Activated CD4-positive, alpha-beta T cell treated with anti-CD3 and anti-CD28 coated beads for 36 hours (primary cell): ENCODE measurements at regions of chr13 and their contacts with region 1.

Region 1: DNA sequence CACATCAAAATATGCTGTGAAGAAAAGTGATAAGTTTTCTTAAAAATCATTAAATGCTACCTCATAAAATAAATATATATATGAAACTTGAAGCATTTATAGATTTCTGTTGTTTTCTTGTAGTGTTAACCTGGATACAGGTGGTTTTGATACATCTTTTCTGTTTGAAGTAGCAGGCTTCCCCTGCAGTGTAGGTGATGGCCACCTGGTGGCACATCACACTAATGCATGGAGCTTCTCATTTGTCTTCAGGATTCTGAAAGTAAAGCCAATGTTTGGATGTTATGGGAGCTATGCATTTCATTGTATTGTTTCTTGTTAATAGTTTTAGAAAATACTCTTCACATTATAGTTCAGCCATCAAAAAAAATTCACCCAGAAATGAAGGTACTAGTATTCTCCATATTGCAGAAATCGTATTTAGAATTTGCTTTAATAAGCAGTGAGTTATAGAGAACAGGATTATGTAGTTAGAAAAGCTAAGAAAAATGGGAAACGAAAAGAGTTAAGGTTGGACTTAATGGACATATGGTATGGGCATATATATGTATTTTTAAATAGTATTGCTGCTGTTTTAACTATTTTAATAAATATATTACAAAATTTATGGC is 18.7 kb downstream of the GPR180 start:
- DNase-seq: peak; percentile 51
- ATAC-seq: peak; percentile 63
- H3K4me3 Mint-ChIP-seq: no peak overlapping the region
- H3K27ac Mint-ChIP-seq: no peak overlapping the region
- H3K4me1 Mint-ChIP-seq: peaks cover 10% of the 10 kb centered on the region
- H3K27me3 Mint-ChIP-seq: no peaks in the 10 kb centered on the region

Region 2: DNA sequence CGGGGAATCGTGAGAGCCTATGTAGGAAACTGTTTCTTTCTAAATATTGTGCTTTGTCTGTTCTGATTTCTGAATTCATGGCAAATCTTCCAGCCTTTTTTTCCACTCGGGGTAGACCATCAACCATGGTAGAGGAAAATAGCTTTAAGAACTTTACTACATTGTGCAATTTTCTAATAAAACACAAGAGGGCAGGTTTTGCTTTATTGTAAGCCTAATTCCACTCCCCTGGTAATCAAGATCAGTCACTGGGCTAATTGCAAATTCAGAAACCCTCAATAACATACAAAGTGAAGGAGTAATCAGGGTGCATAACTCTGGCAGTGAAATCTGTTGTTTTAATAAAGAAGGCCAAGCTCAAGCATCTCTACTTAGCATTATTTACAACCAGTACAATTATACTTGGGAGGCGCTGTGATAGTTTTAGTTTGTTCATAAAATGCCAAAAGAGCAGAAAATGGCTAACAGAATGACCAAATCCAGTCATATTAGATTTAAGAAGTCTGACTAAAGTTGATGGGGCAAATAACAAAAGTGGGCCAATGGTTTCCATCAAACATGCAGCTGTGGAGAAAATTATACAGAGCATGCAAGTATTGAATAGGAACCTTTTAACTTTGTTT is 184.7 kb before region 1 on chr13:
- CTCF ChIA-PET with region 1: interaction called, 176 read pairs
- POLR2A ChIA-PET with region 1: interaction called, 3 read pairs
- intact Hi-C with region 1: loop called (anchors 1 kb)
- DNase-seq: no peak
- ATAC-seq: peak; percentile 65
- H3K4me3 Mint-ChIP-seq: no peak overlapping the region
- H3K27ac Mint-ChIP-seq: no peak overlapping the region
- H3K4me1 Mint-ChIP-seq: peaks cover 33% of the 10 kb centered on the region
- H3K27me3 Mint-ChIP-seq: no peaks in the 10 kb centered on the region

Region 3: GRCh38 chr13:94579063-94579462 is 41.3 kb before region 1 on chr13:
- CTCF ChIA-PET with region 1: interaction called, 10 read pairs
- POLR2A ChIA-PET with region 1: no interaction called
- intact Hi-C with region 1: no loop called
- DNase-seq: no peak
- ATAC-seq: no peak
- H3K4me3 Mint-ChIP-seq: no peak overlapping the region
- H3K27ac Mint-ChIP-seq: no peak overlapping the region
- H3K4me1 Mint-ChIP-seq: peaks cover 10% of the 10 kb centered on the region
- H3K27me3 Mint-ChIP-seq: no peaks in the 10 kb centered on the region

Region 4: GRCh38 chr13:94632227-94632980 is 12.0 kb after region 1 on chr13:
- CTCF ChIA-PET with region 1: interaction called, 14 read pairs
- POLR2A ChIA-PET with region 1: no interaction called
- intact Hi-C with region 1: no loop called
- DNase-seq: no peak
- ATAC-seq: no peak
- H3K4me3 Mint-ChIP-seq: no peak overlapping the region
- H3K27ac Mint-ChIP-seq: no peak overlapping the region
- H3K4me1 Mint-ChIP-seq: peaks cover 8% of the 10 kb centered on the region
- H3K27me3 Mint-ChIP-seq: no peaks in the 10 kb centered on the region

Region 5: GRCh38 chr13:94860981-94861407 is 240.6 kb after region 1 on chr13:
- CTCF ChIA-PET with region 1: no interaction called
- POLR2A ChIA-PET with region 1: no interaction called
- intact Hi-C with region 1: no loop called
- DNase-seq: no peak
- ATAC-seq: peak; percentile 63
- H3K4me3 Mint-ChIP-seq: peak overlapping the region; percentile 71
- H3K27ac Mint-ChIP-seq: peak overlapping the region; percentile 70
- H3K4me1 Mint-ChIP-seq: peaks cover 12% of the 10 kb centered on the region
- H3K27me3 Mint-ChIP-seq: no peaks in the 10 kb centered on the region

Region 6: DNA sequence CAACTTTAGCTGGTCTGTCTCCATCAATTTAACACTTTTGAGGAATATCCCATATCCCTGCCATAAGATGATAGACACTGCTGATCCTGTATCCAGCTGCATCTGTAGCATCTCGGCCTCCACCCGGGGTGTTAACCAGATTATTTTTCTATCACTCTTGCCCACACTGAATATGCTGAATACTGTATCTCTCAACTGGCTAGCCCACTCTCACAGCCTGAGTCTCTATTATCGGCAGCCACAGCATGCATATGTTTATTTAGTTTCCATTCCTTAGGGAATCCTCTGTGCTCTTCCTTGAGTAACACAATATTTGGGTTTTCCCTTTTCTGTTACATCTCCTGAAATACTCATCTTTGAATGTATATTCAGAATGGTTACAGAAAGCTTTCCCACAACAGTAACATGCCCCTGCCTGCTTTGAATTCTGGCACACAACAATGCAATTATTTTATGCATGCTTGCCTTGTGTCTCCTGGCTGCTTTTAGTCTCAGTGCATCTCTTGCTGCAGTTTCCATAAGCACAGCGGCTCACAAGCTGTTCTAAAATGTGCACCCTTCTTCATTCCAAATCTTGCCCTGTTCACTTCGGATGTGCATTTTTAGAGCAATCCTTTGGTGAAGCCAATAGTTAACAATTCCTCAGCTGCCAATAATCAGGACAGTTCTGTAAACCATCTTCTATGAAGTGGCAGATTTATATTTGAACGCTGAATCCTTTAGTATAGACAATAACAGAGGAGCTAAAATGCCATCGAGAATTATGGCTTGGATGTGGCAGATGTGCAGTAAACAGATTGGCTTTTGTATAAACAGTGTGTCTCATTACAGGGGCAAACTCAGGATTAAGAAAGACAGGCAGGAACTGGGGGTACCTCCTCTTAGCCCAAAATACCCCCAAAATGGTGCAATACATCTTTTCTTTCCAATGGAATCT is 353.9 kb after region 1 on chr13:
- CTCF ChIA-PET with region 1: no interaction called
- POLR2A ChIA-PET with region 1: no interaction called
- intact Hi-C with region 1: no loop called
- DNase-seq: no peak
- ATAC-seq: no peak
- H3K4me3 Mint-ChIP-seq: no peak overlapping the region
- H3K27ac Mint-ChIP-seq: no peak overlapping the region
- H3K4me1 Mint-ChIP-seq: no peaks in the 10 kb centered on the region
- H3K27me3 Mint-ChIP-seq: peaks cover 14% of the 10 kb centered on the region

Region 7: DNA sequence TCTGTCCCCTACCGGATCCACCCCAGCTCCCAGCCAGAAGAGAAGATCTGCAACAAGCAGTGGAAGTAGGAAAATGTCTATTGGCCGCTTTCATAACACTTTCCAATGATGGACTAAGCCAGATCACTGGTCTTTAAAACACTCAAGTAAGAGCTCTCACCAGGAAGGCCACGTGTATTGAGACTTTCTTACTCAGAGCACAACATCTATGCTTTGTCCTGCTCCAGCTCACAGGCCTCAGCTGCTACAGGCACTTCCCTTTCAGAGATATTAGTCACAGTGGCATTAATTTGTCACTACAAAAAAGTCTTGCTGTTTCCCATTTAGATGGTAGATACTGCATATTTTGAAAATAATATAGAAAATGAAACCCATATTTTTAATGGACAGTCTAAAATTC is 516.7 kb after region 1 on chr13:
- CTCF ChIA-PET with region 1: no interaction called
- POLR2A ChIA-PET with region 1: no interaction called
- intact Hi-C with region 1: no loop called
- DNase-seq: peak; percentile 19
- ATAC-seq: peak; percentile 84
- H3K4me3 Mint-ChIP-seq: no peak overlapping the region
- H3K27ac Mint-ChIP-seq: no peak overlapping the region
- H3K4me1 Mint-ChIP-seq: peaks cover 2% of the 10 kb centered on the region
- H3K27me3 Mint-ChIP-seq: no peaks in the 10 kb centered on the region